ENCODE measurements at regions of chr11 and their contacts with region 1.

Region 1: DNA sequence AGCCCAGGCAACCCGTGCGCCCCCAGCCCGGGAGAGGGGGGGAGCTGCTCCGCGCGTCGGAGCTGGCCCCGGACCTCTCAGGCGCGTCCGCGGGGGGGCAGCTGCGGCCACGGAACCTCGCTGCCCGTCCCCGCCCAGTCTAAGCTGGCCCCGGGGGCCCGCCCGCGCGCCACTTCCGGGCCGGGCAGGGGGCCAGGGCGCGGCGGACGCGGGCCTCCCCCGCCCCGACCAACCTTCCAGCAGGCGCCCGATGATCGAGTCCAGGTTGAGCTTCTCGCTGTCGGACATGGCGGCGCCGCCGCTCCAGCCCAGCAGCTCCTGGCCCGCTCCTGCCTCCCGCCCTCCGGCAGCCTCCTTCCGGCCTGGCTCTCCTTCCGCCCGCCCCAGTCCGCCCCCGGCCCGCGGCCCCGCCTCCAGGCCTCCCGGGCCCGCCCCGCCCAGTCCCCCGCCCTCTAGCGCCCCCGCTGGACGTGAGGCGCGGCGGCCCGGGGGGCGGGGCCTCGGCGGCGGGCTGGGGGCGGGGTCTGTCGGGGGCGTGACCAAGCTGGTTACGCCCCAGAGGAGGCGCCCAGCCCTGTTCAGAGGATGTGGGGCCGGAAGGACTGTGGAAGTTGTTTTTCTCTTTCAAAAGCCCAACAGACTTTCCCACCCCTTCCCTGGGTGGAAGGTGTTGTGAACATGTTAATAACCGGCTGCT is at the start of gene PPP1CA:
- DNase-seq: peak; percentile 94 to 98
- H3K4me3 ChIP-seq: peak within 1 kb of the TSS; percentile 69
- H3K4me3 Mint-ChIP-seq: peak within 1 kb of the TSS; percentile 75
- H3K27ac Mint-ChIP-seq: peak within 1 kb of the TSS; percentile 74
- H3K4me1 ChIP-seq: peaks cover 14% of the 10 kb centered on the region
- H3K4me1 Mint-ChIP-seq: peaks cover 2% of the 10 kb centered on the region
- H3K27me3 ChIP-seq: no peaks in the 10 kb centered on the region
- H3K27me3 Mint-ChIP-seq: no peaks in the 10 kb centered on the region
- CTCF ChIP-seq: peak; percentile 41 to 58
- total RNA-seq, gene PPP1CA: 384 and 389 TPM in 2 replicates

Region 2: GRCh38 chr11:67353317-67354074 is 48.1 kb before region 1 on chr11 and contains the start of gene POLD4:
- CTCF ChIA-PET with region 1: interaction called, 35 read pairs
- POLR2A ChIA-PET with region 1: interaction called, 11 read pairs
- intact Hi-C with region 1: no loop called
- DNase-seq: peak; percentile 99 to 100
- H3K4me3 ChIP-seq: peak within 1 kb of the TSS; percentile 50
- H3K4me3 Mint-ChIP-seq: peak within 1 kb of the TSS; percentile 83
- H3K27ac Mint-ChIP-seq: peak within 1 kb of the TSS; percentile 81
- H3K4me1 ChIP-seq: peaks cover 51% of the 10 kb centered on the region
- H3K4me1 Mint-ChIP-seq: peaks cover 27% of the 10 kb centered on the region
- H3K27me3 ChIP-seq: no peaks in the 10 kb centered on the region
- H3K27me3 Mint-ChIP-seq: no peaks in the 10 kb centered on the region
- CTCF ChIP-seq: no peak
- total RNA-seq, gene POLD4: 29.8 and 30.8 TPM in 2 replicates

Region 3: GRCh38 chr11:67391304-67392132 is 10.1 kb before region 1 on chr11 and contains the start of gene RAD9A:
- CTCF ChIA-PET with region 1: interaction called, 73 read pairs
- POLR2A ChIA-PET with region 1: interaction called, 63 read pairs
- intact Hi-C with region 1: no loop called
- DNase-seq: peak; percentile 98 to 99
- H3K4me3 ChIP-seq: peak within 1 kb of the TSS; percentile 80
- H3K4me3 Mint-ChIP-seq: peak within 1 kb of the TSS; percentile 76
- H3K27ac Mint-ChIP-seq: peak within 1 kb of the TSS; percentile 63
- H3K4me1 ChIP-seq: peaks cover 5% of the 10 kb centered on the region; the same call in 1 of the 2 replicates
- H3K4me1 Mint-ChIP-seq: peaks cover 23% of the 10 kb centered on the region
- H3K27me3 ChIP-seq: no peaks in the 10 kb centered on the region
- H3K27me3 Mint-ChIP-seq: no peaks in the 10 kb centered on the region
- CTCF ChIP-seq: no peak
- total RNA-seq, gene RAD9A: 55.1 and 63.5 TPM in 2 replicates

Region 4: GRCh38 chr11:67428052-67428914 is 26.6 kb after region 1 on chr11 and contains the start of gene RPS6KB2:
- CTCF ChIA-PET with region 1: interaction called, 11 read pairs
- POLR2A ChIA-PET with region 1: interaction called, 7 read pairs
- intact Hi-C with region 1: loop called (anchors 2 kb)
- DNase-seq: peak; percentile 100
- H3K4me3 ChIP-seq: peak within 1 kb of the TSS; percentile 74
- H3K4me3 Mint-ChIP-seq: peak within 1 kb of the TSS; percentile 93
- H3K27ac Mint-ChIP-seq: peak within 1 kb of the TSS; percentile 96
- H3K4me1 ChIP-seq: peaks cover 4% of the 10 kb centered on the region; the same call in 1 of the 2 replicates
- H3K4me1 Mint-ChIP-seq: no peaks in the 10 kb centered on the region
- H3K27me3 ChIP-seq: no peaks in the 10 kb centered on the region
- H3K27me3 Mint-ChIP-seq: no peaks in the 10 kb centered on the region
- CTCF ChIP-seq: no peak
- total RNA-seq, gene RPS6KB2: 109 and 116 TPM in 2 replicates

Region 5: GRCh38 chr11:67482825-67483798 is 81.5 kb after region 1 on chr11 and contains the start of gene AIP:
- CTCF ChIA-PET with region 1: interaction called, 14 read pairs
- POLR2A ChIA-PET with region 1: interaction called, 12 read pairs
- intact Hi-C with region 1: loop called (anchors 5 kb)
- DNase-seq: peak; percentile 100
- H3K4me3 ChIP-seq: peak within 1 kb of the TSS; percentile 48
- H3K4me3 Mint-ChIP-seq: peak within 1 kb of the TSS; percentile 99
- H3K27ac Mint-ChIP-seq: peak within 1 kb of the TSS; percentile 99
- H3K4me1 ChIP-seq: peaks cover 4% of the 10 kb centered on the region; the same call in 1 of the 2 replicates
- H3K4me1 Mint-ChIP-seq: peaks cover 24% of the 10 kb centered on the region
- H3K27me3 ChIP-seq: no peaks in the 10 kb centered on the region
- H3K27me3 Mint-ChIP-seq: no peaks in the 10 kb centered on the region
- CTCF ChIP-seq: peak; percentile 25 to 65
- total RNA-seq, gene AIP: 110 and 112 TPM in 2 replicates

Measured in Caco-2 (cell line).